Activated naive CD4-positive, alpha-beta T cell treated with anti-CD3 and anti-CD28 coated beads, Interleukin-2, amount 10 ng/mL, durations not matched to agents 7 days and 5 days (primary cell): ENCODE measurements at regions of chr20 and their contacts with region 1.

Region 1: GRCh38 chr20:50575847-50576720 is 65.9 kb downstream of the PTPN1 start:
- DNase-seq: peak; percentile 78
- H3K4me3 Mint-ChIP-seq: no peak overlapping the region
- H3K27ac Mint-ChIP-seq: peak overlapping the region; percentile 26
- H3K4me1 Mint-ChIP-seq: peaks cover 31% of the 10 kb centered on the region
- H3K27me3 Mint-ChIP-seq: no peaks in the 10 kb centered on the region

Region 2: GRCh38 chr20:50346372-50347283 is 229.5 kb before region 1 on chr20:
- CTCF ChIA-PET with region 1: no interaction called
- DNase-seq: peak; percentile 42
- H3K4me3 Mint-ChIP-seq: no peak overlapping the region
- H3K27ac Mint-ChIP-seq: no peak overlapping the region
- H3K4me1 Mint-ChIP-seq: peaks cover 56% of the 10 kb centered on the region
- H3K27me3 Mint-ChIP-seq: peaks cover 12% of the 10 kb centered on the region

Region 3: GRCh38 chr20:50385733-50386640 is 190.1 kb before region 1 on chr20:
- CTCF ChIA-PET with region 1: no interaction called
- DNase-seq: peak; percentile 81
- H3K4me3 Mint-ChIP-seq: peak overlapping the region; percentile 39
- H3K27ac Mint-ChIP-seq: peak overlapping the region; percentile 87
- H3K4me1 Mint-ChIP-seq: peaks cover 83% of the 10 kb centered on the region
- H3K27me3 Mint-ChIP-seq: peaks cover 21% of the 10 kb centered on the region

Region 4: DNA sequence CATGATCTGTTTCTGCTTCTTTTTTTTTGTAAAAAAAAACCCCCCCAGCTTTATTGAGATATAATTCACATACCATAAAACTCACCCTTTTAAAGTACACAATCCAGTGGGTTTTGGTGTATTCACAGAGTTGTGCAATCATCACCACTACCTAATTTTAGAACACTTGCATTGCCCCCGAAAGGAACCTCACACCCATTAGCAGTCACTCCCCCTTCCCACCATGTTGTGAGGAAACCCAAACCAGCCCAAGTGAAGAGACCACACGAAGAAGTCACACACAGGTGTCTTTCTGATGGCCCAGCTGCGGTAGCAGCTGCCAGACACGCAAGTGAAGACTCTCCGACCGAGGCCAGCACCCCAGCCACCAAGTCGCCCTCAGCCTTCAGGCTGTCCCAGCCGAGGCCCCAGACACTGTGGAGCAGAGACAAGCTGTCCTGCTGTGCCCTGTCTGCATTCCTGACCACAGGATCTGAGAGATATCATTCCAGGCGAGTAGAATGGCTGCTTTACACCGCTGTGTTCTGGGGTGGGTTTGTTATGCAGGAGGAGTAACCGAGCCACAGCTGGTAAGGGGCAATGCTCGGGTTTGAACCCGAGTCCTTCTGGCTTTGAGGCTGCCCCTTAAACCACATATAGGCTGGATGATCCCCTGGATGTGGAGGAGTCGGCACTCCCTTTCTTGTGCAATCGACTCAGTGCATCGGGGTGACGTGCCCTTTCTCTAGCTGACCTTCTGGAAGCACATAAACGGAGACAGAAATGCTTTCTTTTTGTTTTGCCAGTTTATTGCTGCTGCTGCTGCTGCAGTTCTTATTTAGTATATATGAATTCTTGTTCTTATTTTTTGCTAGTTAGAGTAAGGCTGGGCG is 125.0 kb before region 1 on chr20:
- CTCF ChIA-PET with region 1: no interaction called
- DNase-seq: peak; percentile 25
- H3K4me3 Mint-ChIP-seq: peak overlapping the region; percentile 39
- H3K27ac Mint-ChIP-seq: no peak overlapping the region
- H3K4me1 Mint-ChIP-seq: peaks cover 22% of the 10 kb centered on the region
- H3K27me3 Mint-ChIP-seq: peaks cover 85% of the 10 kb centered on the region

Region 5: GRCh38 chr20:50471204-50471610 is 104.9 kb before region 1 on chr20:
- CTCF ChIA-PET with region 1: interaction called, 236 read pairs
- DNase-seq: no peak
- H3K4me3 Mint-ChIP-seq: no peak overlapping the region
- H3K27ac Mint-ChIP-seq: no peak overlapping the region
- H3K4me1 Mint-ChIP-seq: peaks cover 31% of the 10 kb centered on the region
- H3K27me3 Mint-ChIP-seq: peaks cover 5% of the 10 kb centered on the region

Region 6: GRCh38 chr20:50504231-50504823 is 71.8 kb before region 1 on chr20:
- CTCF ChIA-PET with region 1: interaction called, 16 read pairs
- DNase-seq: no peak
- H3K4me3 Mint-ChIP-seq: no peak overlapping the region
- H3K27ac Mint-ChIP-seq: no peak overlapping the region
- H3K4me1 Mint-ChIP-seq: peaks cover 21% of the 10 kb centered on the region
- H3K27me3 Mint-ChIP-seq: peaks cover 10% of the 10 kb centered on the region

Region 7: GRCh38 chr20:50561379-50562078 is 14.6 kb before region 1 on chr20:
- CTCF ChIA-PET with region 1: interaction called, 19 read pairs
- DNase-seq: peak; percentile 46
- H3K4me3 Mint-ChIP-seq: no peak overlapping the region
- H3K27ac Mint-ChIP-seq: peak overlapping the region; percentile 74
- H3K4me1 Mint-ChIP-seq: peaks cover 46% of the 10 kb centered on the region
- H3K27me3 Mint-ChIP-seq: no peaks in the 10 kb centered on the region

Region 8: DNA sequence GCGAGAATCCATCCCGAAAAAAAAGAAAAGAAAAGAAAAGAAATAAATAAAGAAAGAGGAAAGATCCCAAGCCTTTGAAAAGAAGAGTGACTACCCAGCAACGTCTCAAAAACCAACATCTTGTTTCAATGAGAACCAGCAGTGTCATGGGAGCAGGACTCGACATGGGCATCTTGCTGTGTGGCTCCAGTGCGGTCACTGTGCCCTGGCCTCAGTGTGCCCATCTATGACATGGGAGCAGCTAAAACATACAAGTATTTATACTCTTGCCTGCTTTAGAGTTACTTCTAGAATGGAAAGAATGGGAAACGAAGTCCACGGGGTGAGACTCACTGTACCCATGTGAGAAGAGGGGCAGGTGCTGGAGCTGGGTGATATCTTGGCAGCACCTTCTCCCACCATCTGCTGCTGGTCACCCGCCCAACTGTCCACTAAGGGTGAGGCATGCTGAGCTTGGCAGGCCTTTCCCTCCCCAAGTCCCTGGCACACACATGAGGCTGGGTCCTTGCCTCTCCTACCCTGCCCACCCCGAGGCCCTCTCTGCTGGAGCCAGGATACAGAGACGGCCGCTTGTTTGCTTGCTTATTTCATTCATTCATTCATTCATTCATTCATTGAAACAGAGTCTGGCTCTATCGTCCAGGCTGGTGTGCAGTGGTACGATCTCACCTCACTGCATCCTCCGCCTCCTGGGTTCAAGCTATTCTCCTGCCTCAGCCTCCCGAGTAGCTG is 37.5 kb after region 1 on chr20:
- CTCF ChIA-PET with region 1: no interaction called
- DNase-seq: no peak
- H3K4me3 Mint-ChIP-seq: no peak overlapping the region
- H3K27ac Mint-ChIP-seq: no peak overlapping the region
- H3K4me1 Mint-ChIP-seq: no peaks in the 10 kb centered on the region
- H3K27me3 Mint-ChIP-seq: peaks cover 3% of the 10 kb centered on the region